ENCODE measurements at regions of chr17 and their contacts with region 1.

Region 1: GRCh38 chr17:40139566-40140058 is 725 bp upstream of the CASC3 start:
- DNase-seq: peak in 4 of 9 donors; percentile 8 to 25 (median 10)
- ATAC-seq: peak; percentile 8
- H3K4me3 ChIP-seq: peak overlapping the region; percentile 80
- H3K4me3 Mint-ChIP-seq: peak overlapping the region; percentile 83 to 97 (median 93)
- H3K27ac ChIP-seq: peak overlapping the region; percentile 96
- H3K27ac Mint-ChIP-seq: peak overlapping the region; percentile 85 to 100 (median 98)
- H3K4me1 ChIP-seq: peaks cover 21 to 28% of the 10 kb centered on the region in 2 donors
- H3K4me1 Mint-ChIP-seq: peaks cover 14 to 62% (median 44%) of the 10 kb centered on the region in 7 donors
- H3K27me3 ChIP-seq: no peaks in the 10 kb centered on the region
- H3K27me3 Mint-ChIP-seq: peaks cover 0 to 2% (median 0%) of the 10 kb centered on the region in 5 donors

Region 2: DNA sequence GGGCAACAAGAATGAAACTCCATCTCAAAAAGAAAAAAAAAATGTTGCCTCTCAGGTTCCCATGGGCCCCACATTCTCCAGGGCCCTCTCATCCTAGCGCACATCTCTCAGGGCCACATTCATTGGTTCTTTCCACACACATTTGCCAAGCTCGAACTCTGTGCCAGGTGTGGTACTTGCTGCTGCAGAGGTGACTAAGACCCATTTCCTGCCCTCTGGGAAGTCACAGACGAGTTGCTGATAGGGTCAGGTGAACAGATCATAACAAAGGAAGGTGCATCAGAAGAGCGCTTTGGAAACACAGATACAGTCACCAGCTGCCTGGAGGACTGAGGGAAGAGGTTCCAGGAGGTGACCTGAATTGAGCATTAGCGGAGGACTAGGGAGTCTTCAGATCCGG is 175.8 kb before region 1 on chr17:
- CTCF ChIA-PET with region 1: no interaction called
- POLR2A ChIA-PET with region 1: no interaction called
- intact Hi-C with region 1: no loop called
- DNase-seq: peak in 4 of 9 donors; percentile 23 to 40 (median 28)
- ATAC-seq: no peak
- H3K4me3 ChIP-seq: no peak overlapping the region
- H3K4me3 Mint-ChIP-seq: peak overlapping the region in 9 of 10 donors; percentile 2 to 66 (median 39)
- H3K27ac ChIP-seq: no peak overlapping the region
- H3K27ac Mint-ChIP-seq: peak overlapping the region in 8 of 9 donors; percentile 40 to 96 (median 69)
- H3K4me1 ChIP-seq: peaks cover 13 to 28% of the 10 kb centered on the region in 2 donors
- H3K4me1 Mint-ChIP-seq: peaks cover 16 to 51% (median 35%) of the 10 kb centered on the region in 7 donors
- H3K27me3 ChIP-seq: no peaks in the 10 kb centered on the region
- H3K27me3 Mint-ChIP-seq: peaks cover 0 to 16% (median 0%) of the 10 kb centered on the region in 5 donors

Region 3: DNA sequence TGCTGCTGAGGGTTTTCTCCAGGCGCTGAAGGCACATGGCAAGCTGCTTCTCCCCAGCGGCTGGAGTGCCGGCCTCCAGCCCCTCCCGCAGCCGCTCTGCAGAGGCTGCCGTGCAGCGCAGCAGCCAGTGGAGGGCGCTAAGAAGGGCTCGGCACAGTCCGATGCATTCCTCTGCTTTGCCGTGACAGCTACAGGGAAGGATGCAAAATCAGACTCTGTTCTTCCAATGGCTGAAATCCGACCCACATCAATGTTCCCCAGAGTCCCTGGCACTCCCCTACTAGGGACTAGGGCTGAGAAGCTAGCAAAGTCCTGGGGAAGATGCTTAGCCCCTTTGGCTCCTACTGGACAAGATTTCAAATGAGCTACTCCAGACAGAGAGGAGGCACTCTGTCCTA is 104.5 kb before region 1 on chr17:
- CTCF ChIA-PET with region 1: no interaction called
- POLR2A ChIA-PET with region 1: no interaction called
- intact Hi-C with region 1: no loop called
- DNase-seq: no peak
- ATAC-seq: no peak
- H3K4me3 ChIP-seq: no peak overlapping the region
- H3K4me3 Mint-ChIP-seq: no peak overlapping the region
- H3K27ac ChIP-seq: no peak overlapping the region
- H3K27ac Mint-ChIP-seq: no peak overlapping the region
- H3K4me1 ChIP-seq: no peaks in the 10 kb centered on the region
- H3K4me1 Mint-ChIP-seq: peaks cover 0 to 7% (median 0%) of the 10 kb centered on the region in 7 donors
- H3K27me3 ChIP-seq: no peaks in the 10 kb centered on the region
- H3K27me3 Mint-ChIP-seq: no peaks in the 10 kb centered on the region

Region 4: DNA sequence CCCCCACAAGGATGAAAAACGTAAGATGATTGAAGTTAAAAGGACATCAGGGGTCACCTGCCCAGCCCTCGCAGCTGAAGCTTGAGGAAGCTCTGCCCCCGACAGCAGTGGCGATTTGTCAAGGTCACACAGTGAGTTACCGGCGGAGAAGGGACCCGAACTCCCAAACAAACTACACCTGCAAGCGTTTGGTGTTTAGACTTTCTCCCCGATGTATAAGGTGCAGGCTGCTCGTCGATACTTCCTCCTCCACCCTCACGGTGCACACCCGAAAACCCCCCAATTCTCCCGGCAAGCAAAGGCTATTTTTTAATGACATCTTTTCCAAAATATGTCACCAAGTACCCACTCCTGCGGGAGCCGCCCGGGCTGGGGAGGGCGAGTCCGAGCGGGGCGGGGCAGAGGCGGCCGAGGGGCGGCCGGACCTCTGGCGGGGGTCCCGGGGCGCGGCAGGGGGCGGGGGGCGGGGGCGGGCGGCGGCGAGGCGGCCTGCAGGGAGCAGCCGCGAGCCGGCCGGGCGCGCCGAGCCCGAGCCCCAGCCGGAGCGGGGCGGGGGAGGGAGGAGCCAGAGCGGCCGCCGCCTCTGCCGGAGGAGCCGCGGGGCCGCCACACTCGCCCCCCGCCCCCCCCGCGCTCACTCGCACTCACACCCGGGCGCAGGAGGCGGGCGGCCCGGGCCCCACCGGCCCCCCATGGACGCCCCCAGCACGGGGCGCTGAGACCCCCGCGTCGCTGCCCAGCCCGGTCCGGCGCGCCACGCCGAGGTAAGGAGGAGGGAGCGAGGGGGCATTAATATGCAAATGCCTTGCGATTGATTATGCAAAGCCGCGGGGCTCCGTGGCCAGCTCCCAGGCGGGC is 77.1 kb before region 1 on chr17 and contains the start of gene THRA:
- CTCF ChIA-PET with region 1: interaction called, 4 read pairs
- POLR2A ChIA-PET with region 1: interaction called, 15 read pairs
- intact Hi-C with region 1: loop called in 1 of 2 experiments (anchors 2 kb)
- DNase-seq: peak; percentile 56 to 77 (median 71)
- ATAC-seq: peak; percentile 93
- H3K4me3 ChIP-seq: peak within 1 kb of the TSS; percentile 81
- H3K4me3 Mint-ChIP-seq: peak within 1 kb of the TSS; percentile 86 to 97 (median 94)
- H3K27ac ChIP-seq: peak within 1 kb of the TSS; percentile 84
- H3K27ac Mint-ChIP-seq: peak within 1 kb of the TSS; percentile 35 to 95 (median 89)
- H3K4me1 ChIP-seq: peaks cover 21 to 34% of the 10 kb centered on the region in 2 donors
- H3K4me1 Mint-ChIP-seq: peaks cover 32 to 50% (median 43%) of the 10 kb centered on the region in 7 donors
- H3K27me3 ChIP-seq: no peaks in the 10 kb centered on the region
- H3K27me3 Mint-ChIP-seq: peaks cover 0 to 62% (median 0%) of the 10 kb centered on the region in 5 donors
- total RNA-seq, gene THRA: 3.2 to 55.9 (median 48.4) TPM

Region 5: DNA sequence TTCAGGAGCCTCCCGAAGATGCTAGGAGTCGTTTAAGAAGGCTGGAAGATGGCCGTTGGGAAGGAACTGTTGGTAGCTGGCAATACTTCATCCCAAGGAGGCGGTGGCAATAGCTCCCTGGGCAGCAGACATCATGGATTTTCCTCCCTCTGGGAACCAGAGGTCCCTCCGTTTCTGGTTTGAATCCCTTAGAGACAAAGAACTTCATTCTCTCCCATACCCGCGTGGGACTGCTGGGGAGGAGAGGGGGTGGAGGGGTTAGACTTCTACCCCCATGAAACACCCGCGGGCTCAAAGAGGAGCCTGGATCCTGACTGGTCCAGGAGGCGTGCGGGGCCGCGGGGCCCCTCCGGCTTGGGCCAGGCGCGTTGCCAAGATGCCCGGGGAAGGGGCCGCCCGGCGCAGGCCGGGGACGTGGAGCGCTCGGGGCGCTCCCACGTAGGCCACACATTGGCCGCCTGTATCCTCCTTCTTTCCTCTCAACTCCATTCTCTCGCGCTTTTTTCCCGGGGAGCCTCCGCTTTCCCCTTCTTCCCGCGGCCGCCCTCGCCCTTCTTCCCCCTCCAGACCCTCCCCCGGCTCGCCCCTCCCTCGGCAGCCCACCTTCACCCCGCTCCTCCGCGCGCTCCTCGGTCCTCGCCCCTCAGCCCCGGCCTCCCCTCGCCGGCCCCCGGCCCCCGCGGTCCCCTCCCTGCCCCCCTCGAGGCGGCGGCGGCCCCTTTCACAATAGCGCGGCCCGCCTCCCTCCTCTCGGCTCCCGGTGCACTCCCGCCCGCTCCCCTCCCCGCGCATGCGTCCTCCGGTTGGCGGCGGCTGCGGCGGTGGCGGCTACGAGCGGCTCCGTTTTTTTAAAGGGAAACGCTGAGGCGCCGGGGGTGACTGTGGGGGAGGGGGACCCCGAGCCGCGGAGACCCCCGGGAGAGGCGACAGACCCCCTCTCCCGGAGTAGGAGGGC is 18.2 kb before region 1 on chr17 and contains the start of gene MSL1:
- CTCF ChIA-PET with region 1: interaction called, 15 read pairs
- POLR2A ChIA-PET with region 1: interaction called, 134 read pairs
- intact Hi-C with region 1: loop called (anchors 1 kb)
- DNase-seq: peak; percentile 81 to 95 (median 86)
- ATAC-seq: peak; percentile 82
- H3K4me3 ChIP-seq: peak within 1 kb of the TSS; percentile 86
- H3K4me3 Mint-ChIP-seq: peak within 1 kb of the TSS; percentile 65 to 99 (median 86)
- H3K27ac ChIP-seq: peak within 1 kb of the TSS; percentile 82
- H3K27ac Mint-ChIP-seq: peak within 1 kb of the TSS; percentile 38 to 97 (median 84)
- H3K4me1 ChIP-seq: peaks cover 12 to 16% of the 10 kb centered on the region in 2 donors
- H3K4me1 Mint-ChIP-seq: peaks cover 32 to 47% (median 38%) of the 10 kb centered on the region in 7 donors
- H3K27me3 ChIP-seq: no peaks in the 10 kb centered on the region
- H3K27me3 Mint-ChIP-seq: no peaks in the 10 kb centered on the region
- total RNA-seq, gene MSL1: 97.0 to 145 (median 113) TPM

Region 6: GRCh38 chr17:40177275-40177874 is 37.8 kb after region 1 on chr17 and contains the start of gene RAPGEFL1:
- CTCF ChIA-PET with region 1: no interaction called
- POLR2A ChIA-PET with region 1: interaction called, 6 read pairs
- intact Hi-C with region 1: loop called in 1 of 2 experiments (anchors 2 kb)
- DNase-seq: peak; percentile 58 to 81 (median 72)
- ATAC-seq: peak; percentile 98
- H3K4me3 ChIP-seq: peak within 1 kb of the TSS; percentile 53
- H3K4me3 Mint-ChIP-seq: peak within 1 kb of the TSS; percentile 62 to 83 (median 69)
- H3K27ac ChIP-seq: peak within 1 kb of the TSS; percentile 61
- H3K27ac Mint-ChIP-seq: peak within 1 kb of the TSS in 5 of 9 donors; percentile 46 to 87 (median 72)
- H3K4me1 ChIP-seq: peaks cover 5% of the 10 kb centered on the region in 2 donors
- H3K4me1 Mint-ChIP-seq: peaks cover 6 to 12% (median 9%) of the 10 kb centered on the region in 7 donors
- H3K27me3 ChIP-seq: no peaks in the 10 kb centered on the region
- H3K27me3 Mint-ChIP-seq: no peaks in the 10 kb centered on the region
- total RNA-seq, gene RAPGEFL1: 5.0 to 10.7 (median 6.3) TPM

Region 7: GRCh38 chr17:40219073-40219860 is 79.7 kb after region 1 on chr17 and contains the start of gene WIPF2:
- CTCF ChIA-PET with region 1: no interaction called
- POLR2A ChIA-PET with region 1: interaction called, 5 read pairs
- intact Hi-C with region 1: loop called (anchors 1 to 2 kb)
- DNase-seq: peak; percentile 88 to 97 (median 95)
- ATAC-seq: peak; percentile 96
- H3K4me3 ChIP-seq: peak within 1 kb of the TSS; percentile 74
- H3K4me3 Mint-ChIP-seq: peak within 1 kb of the TSS; percentile 86 to 100 (median 96)
- H3K27ac ChIP-seq: peak within 1 kb of the TSS; percentile 92
- H3K27ac Mint-ChIP-seq: peak within 1 kb of the TSS; percentile 96 to 100 (median 100)
- H3K4me1 ChIP-seq: peaks cover 9 to 10% of the 10 kb centered on the region in 2 donors
- H3K4me1 Mint-ChIP-seq: peaks cover 25 to 44% (median 32%) of the 10 kb centered on the region in 7 donors
- H3K27me3 ChIP-seq: no peaks in the 10 kb centered on the region
- H3K27me3 Mint-ChIP-seq: no peaks in the 10 kb centered on the region
- total RNA-seq, gene WIPF2: 24.8 to 31.8 (median 28.6) TPM

Region 8: DNA sequence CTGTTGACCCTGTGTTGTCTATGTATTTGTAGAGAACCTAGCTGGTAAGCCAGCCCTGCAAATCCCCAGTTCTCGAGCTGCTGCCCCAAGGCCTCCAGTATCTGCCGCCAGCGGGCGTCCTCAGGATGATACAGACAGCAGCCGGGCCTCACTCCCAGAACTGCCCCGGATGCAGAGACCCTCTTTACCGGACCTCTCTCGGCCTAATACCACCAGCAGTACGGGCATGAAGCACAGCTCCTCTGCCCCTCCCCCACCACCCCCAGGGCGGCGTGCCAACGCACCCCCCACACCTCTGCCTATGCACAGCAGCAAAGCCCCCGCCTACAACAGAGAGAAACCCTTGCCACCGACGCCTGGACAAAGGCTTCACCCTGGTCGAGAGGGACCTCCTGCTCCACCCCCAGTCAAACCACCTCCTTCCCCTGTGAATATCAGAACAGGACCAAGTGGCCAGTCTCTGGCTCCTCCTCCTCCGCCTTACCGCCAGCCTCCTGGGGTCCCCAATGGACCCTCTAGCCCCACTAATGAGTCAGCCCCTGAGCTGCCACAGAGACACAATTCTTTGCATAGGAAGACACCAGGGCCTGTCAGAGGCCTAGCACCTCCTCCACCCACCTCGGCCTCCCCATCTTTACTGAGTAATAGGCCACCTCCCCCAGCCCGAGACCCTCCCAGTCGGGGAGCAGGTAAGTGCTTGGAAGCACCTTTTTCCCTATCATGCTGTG is 125.0 kb after region 1 on chr17:
- CTCF ChIA-PET with region 1: no interaction called
- POLR2A ChIA-PET with region 1: no interaction called
- intact Hi-C with region 1: no loop called
- DNase-seq: no peak
- ATAC-seq: no peak
- H3K4me3 ChIP-seq: no peak overlapping the region
- H3K4me3 Mint-ChIP-seq: no peak overlapping the region
- H3K27ac ChIP-seq: no peak overlapping the region
- H3K27ac Mint-ChIP-seq: peak overlapping the region in 1 of 9 donors; percentile 43
- H3K4me1 ChIP-seq: no peaks in the 10 kb centered on the region
- H3K4me1 Mint-ChIP-seq: peaks cover 0 to 5% (median 0%) of the 10 kb centered on the region in 7 donors
- H3K27me3 ChIP-seq: no peaks in the 10 kb centered on the region
- H3K27me3 Mint-ChIP-seq: no peaks in the 10 kb centered on the region

Region 9: GRCh38 chr17:40287494-40288369 is 148.1 kb after region 1 on chr17 and contains the start of gene CDC6:
- CTCF ChIA-PET with region 1: no interaction called
- POLR2A ChIA-PET with region 1: no interaction called
- intact Hi-C with region 1: loop called in 1 of 2 experiments (anchors 1 kb)
- DNase-seq: peak; percentile 90 to 99 (median 98)
- ATAC-seq: peak; percentile 97
- H3K4me3 ChIP-seq: peak within 1 kb of the TSS; percentile 70
- H3K4me3 Mint-ChIP-seq: peak within 1 kb of the TSS; percentile 93 to 99 (median 96)
- H3K27ac ChIP-seq: peak within 1 kb of the TSS; percentile 63
- H3K27ac Mint-ChIP-seq: peak within 1 kb of the TSS; percentile 84 to 98 (median 91)
- H3K4me1 ChIP-seq: peaks cover 3 to 11% of the 10 kb centered on the region in 2 donors
- H3K4me1 Mint-ChIP-seq: peaks cover 8 to 41% (median 22%) of the 10 kb centered on the region in 7 donors
- H3K27me3 ChIP-seq: no peaks in the 10 kb centered on the region
- H3K27me3 Mint-ChIP-seq: no peaks in the 10 kb centered on the region
- total RNA-seq, gene CDC6: 0.51 to 73.6 (median 0.85) TPM

Region 10: DNA sequence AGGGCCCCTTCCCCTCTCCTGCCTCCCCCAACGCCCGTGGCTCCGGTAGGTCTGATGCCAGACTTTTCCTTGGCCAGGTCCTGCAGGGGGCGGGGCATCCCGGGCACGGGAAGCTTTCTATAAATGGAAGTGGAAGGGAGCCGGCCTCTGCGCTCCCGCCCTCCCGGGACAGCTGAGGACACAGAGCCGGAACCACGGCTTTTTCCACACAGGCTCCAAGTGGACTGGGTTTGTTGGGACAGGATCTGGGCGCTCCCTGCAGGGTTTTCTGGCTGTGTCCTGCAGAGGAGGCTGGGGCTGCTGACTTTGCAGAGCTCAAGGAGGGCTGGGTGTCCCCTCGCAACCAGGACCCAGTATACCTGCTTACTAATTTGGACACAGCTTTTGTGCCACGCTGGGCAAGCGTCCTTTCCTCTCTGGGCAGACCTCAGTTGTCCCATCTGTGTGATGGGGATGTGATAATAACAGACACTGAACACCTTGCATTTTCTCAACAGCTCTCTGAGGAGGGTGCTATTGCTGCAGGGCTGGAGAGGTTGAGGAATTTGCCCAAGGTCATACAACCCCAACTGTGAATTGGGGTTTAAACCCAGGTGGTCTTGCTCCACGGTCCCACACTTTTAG is 360.1 kb after region 1 on chr17:
- CTCF ChIA-PET with region 1: no interaction called
- POLR2A ChIA-PET with region 1: no interaction called
- intact Hi-C with region 1: no loop called
- DNase-seq: no peak
- ATAC-seq: no peak
- H3K4me3 ChIP-seq: no peak overlapping the region
- H3K4me3 Mint-ChIP-seq: no peak overlapping the region
- H3K27ac ChIP-seq: no peak overlapping the region
- H3K27ac Mint-ChIP-seq: no peak overlapping the region
- H3K4me1 ChIP-seq: no peaks in the 10 kb centered on the region
- H3K4me1 Mint-ChIP-seq: peaks cover 0 to 18% (median 3%) of the 10 kb centered on the region in 7 donors
- H3K27me3 ChIP-seq: no peaks in the 10 kb centered on the region
- H3K27me3 Mint-ChIP-seq: peaks cover 0 to 11% (median 0%) of the 10 kb centered on the region in 5 donors

Measured in naive thymus-derived CD4-positive, alpha-beta T cell (primary cell).